AG04449 (cell line): ENCODE measurements at regions of chr4 and their contacts with region 1.

Region 1: GRCh38 chr4:78749972-78750727 is 26.0 kb upstream of the BMP2K start:
- DNase-seq: no peak
- H3K4me3 ChIP-seq: no peak overlapping the region
- CTCF ChIP-seq: no peak

Region 2: DNA sequence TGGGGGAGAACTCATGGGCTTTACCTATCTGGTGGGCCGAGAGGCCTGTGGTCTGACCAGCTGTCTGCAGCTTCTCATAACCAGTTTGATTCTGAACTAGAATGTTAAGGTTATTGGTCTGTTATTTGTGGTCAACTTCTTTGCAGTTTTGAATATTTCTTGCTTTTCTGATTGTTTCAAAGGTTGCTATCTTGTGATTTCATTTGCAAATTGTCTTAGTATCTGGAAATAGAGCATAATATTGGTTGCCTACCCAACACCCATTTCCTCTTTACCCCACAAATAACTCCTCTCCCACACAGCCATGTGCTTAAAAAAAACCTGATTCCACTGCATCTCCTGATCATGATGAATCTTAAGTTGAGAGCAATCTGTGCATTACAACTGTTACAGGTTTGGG is 13.1 kb before region 1 on chr4:
- CTCF ChIA-PET with region 1: interaction called, 11 read pairs
- POLR2A ChIA-PET with region 1: interaction called, 3 read pairs
- DNase-seq: no peak
- H3K4me3 ChIP-seq: no peak overlapping the region
- CTCF ChIP-seq: no peak